Heart right ventricle (tissue), 16 donors: ENCODE measurements at regions of chr5 and their contacts with region 1.

Region 1: GRCh38 chr5:168874713-168875380 is 295.7 kb upstream of the PANK3 start:
- DNase-seq: no peak
- ATAC-seq: no peak
- H3K4me3 ChIP-seq: no peak overlapping the region
- H3K27ac ChIP-seq: no peak overlapping the region
- H3K4me1 ChIP-seq: peaks cover 0 to 14% (median 6%) of the 10 kb centered on the region in 9 donors
- H3K27me3 ChIP-seq: peaks cover 0 to 3% (median 0%) of the 10 kb centered on the region in 7 donors
- CTCF ChIP-seq: peak in 6 of 9 donors; percentile 19 to 48 (median 26)

Region 2: GRCh38 chr5:168831383-168831782 is 43.5 kb before region 1 on chr5:
- intact Hi-C with region 1: loop called in 1 of 10 experiments (anchors 5 kb)
- DNase-seq: no peak
- ATAC-seq: peak in 5 of 8 donors; percentile 24 to 65 (median 42)
- H3K4me3 ChIP-seq: no peak overlapping the region
- H3K27ac ChIP-seq: peak overlapping the region in 4 of 10 donors; percentile 4 to 39 (median 14)
- H3K4me1 ChIP-seq: peaks cover 0 to 16% (median 3%) of the 10 kb centered on the region in 9 donors
- H3K27me3 ChIP-seq: no peaks in the 10 kb centered on the region
- CTCF ChIP-seq: no peak

Region 3: GRCh38 chr5:169070407-169070806 is 195.6 kb after region 1 on chr5:
- intact Hi-C with region 1: no loop called
- DNase-seq: no peak
- ATAC-seq: no peak
- H3K4me3 ChIP-seq: no peak overlapping the region
- H3K27ac ChIP-seq: no peak overlapping the region
- H3K4me1 ChIP-seq: peaks cover 0 to 13% (median 7%) of the 10 kb centered on the region in 9 donors
- H3K27me3 ChIP-seq: no peaks in the 10 kb centered on the region
- CTCF ChIP-seq: no peak